ENCODE measurements at regions of chr12 and their contacts with region 1.

Region 1: DNA sequence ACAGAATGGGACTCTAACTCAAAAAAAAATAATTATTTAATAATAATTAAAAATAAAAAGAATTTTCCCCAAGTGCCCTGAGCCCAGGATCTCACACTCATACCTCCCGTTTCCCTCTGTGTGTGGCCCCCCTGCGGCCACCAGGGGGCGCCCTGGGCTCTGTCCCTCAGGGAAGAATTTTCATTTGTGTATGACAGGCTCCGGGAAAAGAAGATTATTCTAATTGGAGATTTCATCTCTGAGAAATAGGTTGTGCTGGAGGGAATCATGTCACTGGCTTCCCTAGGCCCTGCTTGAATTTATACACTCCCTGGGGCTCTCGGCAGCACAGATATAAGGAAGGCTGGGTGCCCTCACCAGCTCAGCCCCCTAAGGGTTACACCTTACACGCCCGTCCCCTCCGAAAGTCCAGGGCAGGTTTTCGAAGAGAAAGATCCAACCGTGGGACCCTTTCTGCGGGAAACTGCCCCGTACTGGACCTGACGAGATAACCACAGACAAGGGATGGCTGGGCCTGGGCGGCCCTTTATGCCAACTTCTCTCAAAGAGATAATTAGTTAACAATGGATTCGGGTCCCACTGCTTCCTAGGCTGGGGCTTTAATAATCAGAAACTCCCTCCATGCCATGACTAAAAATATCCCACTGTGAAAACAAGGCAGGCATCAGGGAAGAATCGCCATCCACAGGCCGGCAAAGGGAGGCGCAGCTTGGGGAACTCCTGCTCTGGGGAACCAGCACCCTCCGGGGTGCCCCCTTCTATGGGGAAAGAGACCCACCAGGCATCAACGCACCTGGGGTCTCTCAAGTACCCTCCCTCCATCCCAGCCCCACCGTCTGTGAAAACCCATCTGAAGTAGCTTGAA is 80.7 kb downstream of the KDM2B start:
- DNase-seq: no peak
- ATAC-seq: peak; percentile 95
- H3K4me3 ChIP-seq: no peak overlapping the region
- H3K27ac ChIP-seq: no peak overlapping the region
- H3K4me1 ChIP-seq: no peaks in the 10 kb centered on the region
- H3K27me3 ChIP-seq: no peaks in the 10 kb centered on the region
- CTCF ChIP-seq: peak; percentile 96

Region 2: DNA sequence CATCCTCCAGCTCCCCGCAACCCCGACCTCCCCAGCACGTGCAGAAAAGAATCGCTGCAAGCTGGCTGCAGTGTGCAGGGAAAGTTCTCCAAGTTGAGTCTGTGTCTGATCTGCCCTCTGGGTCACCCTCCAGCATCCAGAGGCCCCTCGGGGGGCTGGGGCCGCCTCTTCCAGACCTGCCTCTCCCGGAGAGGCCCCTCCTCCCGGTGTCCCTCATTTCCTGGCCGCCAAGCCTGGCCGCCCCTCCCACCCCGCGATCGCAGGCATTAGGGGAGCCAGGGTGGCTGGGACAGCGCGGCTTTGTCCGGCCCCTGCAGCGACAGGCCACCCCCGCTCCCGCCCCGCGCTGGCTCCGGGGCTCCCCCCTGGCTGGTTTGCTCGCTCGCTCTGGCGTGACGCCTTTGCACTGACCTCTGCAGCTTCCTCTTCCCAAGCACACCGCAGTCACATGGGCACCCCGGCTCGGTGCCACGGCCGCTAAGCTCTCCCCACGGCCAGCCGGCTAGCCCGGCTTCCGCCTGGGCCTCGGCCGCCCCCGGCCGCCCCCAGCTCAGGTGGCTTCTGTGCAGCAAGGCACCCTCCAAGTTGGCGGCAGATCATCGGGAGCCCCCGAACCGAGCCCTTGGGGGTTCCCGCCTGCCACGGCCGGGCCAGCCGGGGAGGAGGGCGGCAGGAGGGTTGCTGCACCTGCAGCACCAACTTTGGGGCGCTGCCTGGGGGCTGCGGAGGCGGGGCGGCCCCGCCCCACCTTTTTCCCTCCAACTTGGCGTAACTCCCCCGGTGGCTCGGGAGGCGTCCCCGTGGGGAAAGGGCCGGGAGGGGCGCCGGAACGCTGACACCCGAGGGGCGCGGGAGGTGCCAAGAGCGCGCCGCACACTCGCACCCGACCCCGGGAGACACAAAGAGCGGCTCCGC is 37.0 kb after region 1 on chr12:
- CTCF ChIA-PET with region 1: no interaction called
- POLR2A ChIA-PET with region 1: no interaction called
- in situ Hi-C with region 1: no loop called
- intact Hi-C with region 1: loop called (anchors 2 kb)
- DNase-seq: no peak
- ATAC-seq: peak; percentile 80
- H3K4me3 ChIP-seq: peak overlapping the region; percentile 48 to 54
- H3K27ac ChIP-seq: 0 out of 2 replicates have a peak overlapping the region, but pooled peaks have one; percentile 36
- H3K4me1 ChIP-seq: peaks cover 10% of the 10 kb centered on the region; the same call in 1 of the 2 replicates
- H3K27me3 ChIP-seq: no peaks in the 10 kb centered on the region
- CTCF ChIP-seq: no peak

Region 3: GRCh38 chr12:121688966-121689365 is 188.8 kb after region 1 on chr12:
- CTCF ChIA-PET with region 1: no interaction called
- POLR2A ChIA-PET with region 1: no interaction called
- in situ Hi-C with region 1: no loop called
- intact Hi-C with region 1: loop called (anchors 10 kb)
- DNase-seq: no peak
- ATAC-seq: no peak
- H3K4me3 ChIP-seq: no peak overlapping the region
- H3K27ac ChIP-seq: no peak overlapping the region
- H3K4me1 ChIP-seq: no peaks in the 10 kb centered on the region; the same call in 1 of the 2 replicates
- H3K27me3 ChIP-seq: no peaks in the 10 kb centered on the region
- CTCF ChIP-seq: no peak

Measured in Panc1 (cell line).